Panc1 (cell line): ENCODE measurements at regions of chr3 and their contacts with region 1.

Region 1: GRCh38 chr3:113626503-113627371 is 69.7 kb downstream of the USF3 start:
- DNase-seq: peak; percentile 45
- ATAC-seq: peak; percentile 98
- H3K4me3 ChIP-seq: no peak overlapping the region
- H3K27ac ChIP-seq: no peak overlapping the region
- H3K4me1 ChIP-seq: no peaks in the 10 kb centered on the region
- H3K27me3 ChIP-seq: peaks cover 2% of the 10 kb centered on the region; the same call in 1 of the 2 replicates
- CTCF ChIP-seq: peak; percentile 99

Region 2: GRCh38 chr3:113051302-113051711 is 575.4 kb before region 1 on chr3:
- CTCF ChIA-PET with region 1: no interaction called
- POLR2A ChIA-PET with region 1: no interaction called
- in situ Hi-C with region 1: no loop called
- intact Hi-C with region 1: loop called (anchors 2 kb)
- DNase-seq: peak; percentile 69
- ATAC-seq: peak; percentile 97
- H3K4me3 ChIP-seq: no peak overlapping the region
- H3K27ac ChIP-seq: no peak overlapping the region
- H3K4me1 ChIP-seq: no peaks in the 10 kb centered on the region
- H3K27me3 ChIP-seq: peaks cover 5% of the 10 kb centered on the region
- CTCF ChIP-seq: peak; percentile 96

Region 3: DNA sequence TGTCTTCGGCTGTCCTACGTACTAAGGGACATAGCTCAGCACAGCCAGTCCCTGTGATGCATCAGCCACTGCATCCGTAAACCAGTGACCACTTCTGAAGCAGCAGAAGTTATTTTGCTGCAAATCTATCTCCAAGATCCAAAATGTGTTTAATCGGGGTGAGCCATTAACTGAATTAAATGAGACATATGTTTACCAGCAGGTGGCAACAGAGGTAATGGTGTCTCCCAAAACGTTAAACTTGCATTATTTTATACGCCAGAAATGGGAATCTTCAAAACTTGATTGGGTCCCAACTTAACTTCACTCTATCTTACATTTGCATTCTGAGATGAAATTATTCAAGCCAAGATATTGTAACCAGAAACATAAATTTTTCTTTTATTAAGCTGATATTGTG is 490.7 kb before region 1 on chr3:
- CTCF ChIA-PET with region 1: no interaction called
- POLR2A ChIA-PET with region 1: no interaction called
- in situ Hi-C with region 1: no loop called
- intact Hi-C with region 1: loop called (anchors 10 kb)
- DNase-seq: peak; percentile 8
- ATAC-seq: peak; percentile 63; the same call in 1 of the 2 replicates
- H3K4me3 ChIP-seq: no peak overlapping the region
- H3K27ac ChIP-seq: no peak overlapping the region
- H3K4me1 ChIP-seq: no peaks in the 10 kb centered on the region
- H3K27me3 ChIP-seq: no peaks in the 10 kb centered on the region
- CTCF ChIP-seq: peak; percentile 72

Region 4: GRCh38 chr3:113287803-113288648 is 338.7 kb before region 1 on chr3:
- CTCF ChIA-PET with region 1: no interaction called
- POLR2A ChIA-PET with region 1: no interaction called
- in situ Hi-C with region 1: no loop called
- intact Hi-C with region 1: loop called (anchors 5 kb)
- DNase-seq: peak; percentile 87
- ATAC-seq: peak; percentile 67
- H3K4me3 ChIP-seq: no peak overlapping the region
- H3K27ac ChIP-seq: no peak overlapping the region
- H3K4me1 ChIP-seq: peaks cover 8% of the 10 kb centered on the region
- H3K27me3 ChIP-seq: peaks cover 8% of the 10 kb centered on the region; the same call in 1 of the 2 replicates
- CTCF ChIP-seq: peak; percentile 100

Region 5: DNA sequence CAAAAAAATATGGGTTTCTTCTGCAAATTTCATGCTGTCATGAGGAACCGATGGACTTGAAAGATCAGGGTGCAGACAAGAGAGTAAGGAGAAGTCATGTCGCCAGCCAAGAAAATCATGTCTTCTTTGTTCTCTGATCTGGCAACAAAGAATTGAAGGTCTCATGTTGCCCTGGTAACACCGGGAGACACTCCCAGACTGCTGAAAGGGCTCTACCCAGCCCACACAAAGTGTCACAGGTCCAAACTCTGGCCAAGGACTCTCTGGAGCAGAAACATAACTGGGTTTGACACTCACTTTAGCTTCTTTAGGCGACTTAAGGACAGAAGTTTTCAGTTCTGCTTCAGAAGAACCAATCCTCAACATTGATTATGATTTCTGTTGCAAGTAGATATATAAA is 51.5 kb before region 1 on chr3:
- CTCF ChIA-PET with region 1: no interaction called
- POLR2A ChIA-PET with region 1: no interaction called
- in situ Hi-C with region 1: no loop called
- intact Hi-C with region 1: loop called (anchors 1 kb)
- DNase-seq: no peak
- ATAC-seq: no peak
- H3K4me3 ChIP-seq: no peak overlapping the region
- H3K27ac ChIP-seq: no peak overlapping the region
- H3K4me1 ChIP-seq: no peaks in the 10 kb centered on the region
- H3K27me3 ChIP-seq: peaks cover 29% of the 10 kb centered on the region
- CTCF ChIP-seq: no peak